Colonic mucosa (tissue), 4 donors: ENCODE measurements at regions of chr1 and their contacts with region 1.

Region 1: DNA sequence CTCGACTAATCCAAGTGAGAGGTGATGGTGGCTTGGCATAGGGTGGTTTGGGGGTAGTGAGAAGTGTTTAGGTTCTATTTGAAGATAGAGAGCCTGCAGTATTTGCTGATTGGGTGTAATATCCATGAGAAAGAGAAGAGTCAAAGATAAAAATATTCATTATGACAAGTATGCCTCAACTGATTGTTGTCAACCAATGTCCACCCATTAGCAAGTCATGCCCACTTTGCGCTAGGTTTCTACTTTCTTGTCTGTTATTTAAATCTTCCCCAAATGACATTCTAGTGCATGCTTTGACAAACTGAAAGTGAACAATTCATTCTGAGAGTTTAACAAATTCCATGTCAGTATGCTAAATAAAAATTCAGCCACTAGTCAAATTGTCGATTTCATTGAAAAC is 3.8 kb upstream of the XCL1 start:
- DNase-seq: no peak
- H3K4me3 ChIP-seq: no peak overlapping the region
- H3K27ac ChIP-seq: no peak overlapping the region
- H3K4me1 ChIP-seq: no peaks in the 10 kb centered on the region
- H3K27me3 ChIP-seq: no peaks in the 10 kb centered on the region
- CTCF ChIP-seq: no peak

Region 2: DNA sequence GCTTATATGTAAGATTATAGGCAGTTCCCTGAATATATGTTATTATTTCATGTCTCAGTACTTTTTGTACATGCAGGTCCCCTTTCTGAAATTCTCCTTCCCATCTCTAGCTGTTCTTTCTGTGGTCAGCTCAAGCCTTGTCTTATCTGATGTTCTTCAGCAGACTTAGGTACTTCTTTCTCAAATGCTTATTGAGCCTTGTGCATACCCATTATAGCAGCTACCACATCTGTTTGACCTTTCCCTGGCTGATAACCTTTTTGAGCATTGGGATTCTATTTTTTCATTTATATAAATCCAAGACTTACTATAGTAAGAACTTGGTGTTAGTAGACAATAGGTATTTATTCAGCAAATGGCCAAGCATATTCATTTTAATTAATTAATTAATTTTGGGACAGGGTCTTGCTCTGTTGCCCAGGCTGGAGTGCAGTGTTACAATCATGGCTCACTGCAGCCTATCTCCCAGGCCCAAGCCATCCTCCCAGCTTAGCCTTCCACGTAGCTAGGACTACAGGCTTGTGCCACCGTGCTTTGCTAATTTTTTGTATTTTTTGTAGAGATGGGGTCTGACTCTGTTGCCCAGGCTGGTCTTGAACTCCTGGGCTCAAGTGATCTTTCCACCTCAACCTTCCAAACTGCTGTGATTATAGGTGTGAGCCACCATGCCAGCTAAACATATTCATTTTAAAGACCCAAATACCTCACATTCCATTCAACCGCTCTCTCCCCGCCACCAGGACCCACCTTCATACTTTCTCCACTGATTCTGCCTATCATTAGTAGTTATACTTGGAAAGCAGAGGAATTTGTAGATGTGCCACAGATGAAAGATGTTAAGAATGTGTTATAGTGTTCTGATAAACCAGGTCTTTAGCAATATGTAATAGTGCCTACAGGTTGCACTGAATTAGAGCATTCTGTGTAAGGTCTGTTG is 377.2 kb before region 1 on chr1:
- intact Hi-C with region 1: loop called (anchors 10 kb)
- DNase-seq: no peak
- H3K4me3 ChIP-seq: no peak overlapping the region
- H3K27ac ChIP-seq: no peak overlapping the region
- H3K4me1 ChIP-seq: no peaks in the 10 kb centered on the region
- H3K27me3 ChIP-seq: no peaks in the 10 kb centered on the region
- CTCF ChIP-seq: no peak

Region 3: DNA sequence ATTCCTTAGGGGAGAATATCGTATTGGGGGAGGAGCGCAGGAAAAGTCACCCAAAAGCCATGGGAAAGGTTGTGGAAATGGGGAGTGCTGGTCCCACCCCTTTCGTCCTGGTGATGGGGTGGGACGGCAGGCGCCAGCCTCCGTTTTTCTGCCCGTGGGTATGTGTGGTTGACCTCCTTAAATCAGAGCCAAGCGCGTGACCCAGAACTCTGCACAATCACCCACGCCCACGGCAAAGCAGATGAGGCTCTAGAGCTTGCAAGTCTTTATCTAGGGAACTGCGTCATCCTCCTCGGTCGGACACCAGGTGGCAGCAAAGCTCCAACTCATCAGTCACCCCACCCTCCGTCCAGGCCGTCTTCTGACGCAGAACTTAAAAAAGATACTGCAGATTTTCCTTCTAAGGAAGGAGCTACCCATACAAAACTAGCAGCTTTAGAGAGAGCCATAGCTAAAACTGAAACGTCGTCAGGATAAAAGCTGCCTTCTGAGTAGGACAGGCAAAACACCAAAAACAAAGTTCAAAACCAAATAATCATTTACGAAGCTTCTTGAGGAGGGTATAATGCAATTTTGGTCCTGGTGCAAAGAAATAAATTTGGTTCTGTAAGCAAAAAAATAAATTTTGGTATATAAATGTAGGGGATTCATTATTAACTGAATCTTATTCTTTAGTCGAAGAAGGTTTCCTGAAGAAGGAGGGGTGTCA is 229.9 kb before region 1 on chr1:
- intact Hi-C with region 1: loop called (anchors 10 kb)
- DNase-seq: peak; percentile 87
- H3K4me3 ChIP-seq: no peak overlapping the region
- H3K27ac ChIP-seq: no peak overlapping the region
- H3K4me1 ChIP-seq: no peaks in the 10 kb centered on the region
- H3K27me3 ChIP-seq: no peaks in the 10 kb centered on the region
- CTCF ChIP-seq: peak; percentile 86

Region 4: DNA sequence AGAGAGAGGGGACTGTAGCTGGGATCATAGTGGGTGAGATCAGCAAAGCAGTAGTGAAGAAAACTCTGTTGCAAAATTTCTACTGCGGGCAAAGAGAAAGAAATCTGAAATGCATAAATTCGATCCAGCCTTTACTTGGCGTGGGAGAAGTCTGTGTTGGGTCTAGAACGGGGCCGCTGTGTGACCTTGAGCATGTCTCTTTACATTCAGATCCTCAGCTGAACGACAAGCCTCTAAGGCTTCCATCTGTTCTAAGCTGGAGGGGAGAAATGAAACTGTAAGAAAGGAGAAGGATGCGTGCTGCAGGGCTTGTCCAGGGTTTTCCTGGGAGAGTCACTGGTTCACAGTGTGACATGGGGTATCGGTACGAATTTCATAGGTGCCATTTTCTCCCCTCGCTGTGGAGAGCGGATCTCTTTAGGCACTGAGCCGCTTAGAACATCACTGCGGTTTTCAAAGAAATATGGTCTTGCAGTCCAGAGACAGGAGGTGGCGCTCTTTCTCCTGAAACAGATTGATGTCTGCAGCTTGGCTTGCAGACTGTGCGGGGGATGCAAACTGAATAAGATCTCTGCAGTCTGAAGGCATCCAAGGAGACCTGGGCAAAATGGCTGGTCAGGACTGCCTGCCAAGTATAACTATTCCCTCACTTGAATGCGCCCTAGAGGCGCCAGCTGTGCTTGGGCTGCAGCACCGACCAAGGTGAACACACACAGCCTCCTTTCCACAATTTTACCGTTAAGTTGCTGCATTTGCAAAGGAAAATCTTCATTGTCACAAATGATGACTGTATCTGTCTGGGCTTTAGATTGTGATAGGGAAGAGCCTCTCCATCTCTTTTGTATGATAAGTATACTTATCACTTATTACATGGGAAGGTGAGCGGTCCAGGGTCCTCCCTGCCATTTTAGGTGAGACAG is 132.9 kb before region 1 on chr1:
- intact Hi-C with region 1: loop called (anchors 2 kb)
- DNase-seq: peak; percentile 83
- H3K4me3 ChIP-seq: no peak overlapping the region
- H3K27ac ChIP-seq: no peak overlapping the region
- H3K4me1 ChIP-seq: no peaks in the 10 kb centered on the region
- H3K27me3 ChIP-seq: no peaks in the 10 kb centered on the region
- CTCF ChIP-seq: peak; percentile 73